Activated naive CD4-positive, alpha-beta T cell treated with anti-CD3 and anti-CD28 coated beads for 36 hours (primary cell): ENCODE measurements at regions of chr4 and their contacts with region 1.

Region 1: DNA sequence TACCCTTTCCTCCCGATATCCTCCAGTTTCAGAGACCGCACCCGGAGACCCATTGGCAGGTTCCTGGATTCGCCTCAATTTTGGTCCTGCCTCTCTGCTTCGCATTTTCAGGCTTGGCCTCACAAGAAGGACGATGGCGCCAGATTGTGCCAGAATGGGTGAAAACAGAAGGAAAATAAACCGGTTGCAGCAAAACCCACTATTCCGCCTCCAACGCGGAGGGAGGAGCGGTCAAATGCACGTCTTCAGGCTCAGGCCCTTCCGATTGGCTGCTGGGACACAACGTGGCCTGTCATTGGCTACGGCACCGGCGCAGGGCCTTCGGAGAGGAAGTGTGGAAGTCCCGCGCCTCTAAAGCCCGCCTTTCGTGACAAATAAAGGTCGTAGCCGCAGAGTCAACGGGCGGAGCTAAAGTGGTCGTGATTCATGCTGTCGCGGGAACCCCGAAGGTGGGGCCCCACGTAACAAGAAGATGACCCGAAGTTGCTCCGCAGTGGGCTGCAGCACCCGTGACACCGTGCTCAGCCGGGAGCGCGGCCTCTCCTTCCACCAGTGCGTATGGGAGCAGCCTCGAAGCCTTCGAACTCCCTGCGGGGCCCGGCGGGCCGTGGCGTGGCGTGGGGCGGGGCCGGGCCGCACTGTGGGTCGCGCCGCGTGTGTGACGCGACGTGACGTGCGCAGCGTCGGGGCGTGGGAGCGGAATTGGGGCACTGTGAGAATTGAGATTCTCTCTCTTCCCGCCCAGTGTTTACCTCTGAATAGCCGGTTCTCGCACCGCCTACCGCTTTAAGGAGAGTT is at the start of gene THAP9:
- DNase-seq: peak; percentile 99
- H3K4me3 Mint-ChIP-seq: no peak within 1 kb of the TSS
- H3K27ac Mint-ChIP-seq: no peak within 1 kb of the TSS
- H3K4me1 Mint-ChIP-seq: peaks cover 41% of the 10 kb centered on the region
- H3K27me3 Mint-ChIP-seq: no peaks in the 10 kb centered on the region
- total RNA-seq, gene THAP9: 2.7 to 3.3 TPM

Region 2: DNA sequence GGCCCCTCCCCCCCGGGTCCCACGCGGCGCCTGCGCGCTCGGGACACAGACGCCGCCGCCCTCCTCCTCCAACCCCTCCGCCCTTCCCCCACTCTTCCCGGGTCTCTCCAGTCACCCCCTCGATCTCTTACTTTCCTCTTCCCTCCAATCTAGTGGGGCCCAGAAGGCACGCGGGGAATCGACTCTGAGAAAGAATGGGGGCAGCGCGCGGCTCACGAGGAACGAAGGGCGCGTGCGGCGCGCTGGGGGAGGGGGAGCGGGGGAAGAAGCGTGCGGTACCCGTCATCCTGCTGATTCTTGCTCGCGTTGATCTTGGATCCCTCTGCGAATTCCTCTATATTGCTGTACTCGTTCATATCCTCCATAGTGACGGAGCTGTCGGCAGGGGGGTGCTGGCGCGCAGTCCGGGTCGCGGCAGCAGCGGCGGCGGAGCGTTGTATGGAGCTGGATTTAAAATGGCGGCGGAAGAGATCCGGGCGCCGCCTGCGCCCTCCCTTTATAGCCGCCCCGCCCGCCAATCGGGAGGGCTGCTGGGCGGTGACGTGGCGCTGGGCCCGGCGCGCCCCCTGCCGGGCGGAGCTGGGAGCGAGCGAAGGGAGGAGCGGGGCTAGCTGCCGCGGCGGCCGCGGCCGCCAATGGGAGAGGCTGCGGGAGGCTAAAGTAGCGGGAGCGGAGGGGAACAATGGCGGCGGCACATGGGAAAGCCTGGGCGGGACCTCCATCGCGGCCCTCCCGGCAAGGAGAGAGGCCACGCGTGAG is 471.4 kb before region 1 on chr4:
- CTCF ChIA-PET with region 1: no interaction called
- intact Hi-C with region 1: loop called (anchors 1 kb)
- DNase-seq: peak; percentile 92
- H3K4me3 Mint-ChIP-seq: peak overlapping the region; percentile 93
- H3K27ac Mint-ChIP-seq: peak overlapping the region; percentile 99
- H3K4me1 Mint-ChIP-seq: peaks cover 64% of the 10 kb centered on the region
- H3K27me3 Mint-ChIP-seq: no peaks in the 10 kb centered on the region

Region 3: DNA sequence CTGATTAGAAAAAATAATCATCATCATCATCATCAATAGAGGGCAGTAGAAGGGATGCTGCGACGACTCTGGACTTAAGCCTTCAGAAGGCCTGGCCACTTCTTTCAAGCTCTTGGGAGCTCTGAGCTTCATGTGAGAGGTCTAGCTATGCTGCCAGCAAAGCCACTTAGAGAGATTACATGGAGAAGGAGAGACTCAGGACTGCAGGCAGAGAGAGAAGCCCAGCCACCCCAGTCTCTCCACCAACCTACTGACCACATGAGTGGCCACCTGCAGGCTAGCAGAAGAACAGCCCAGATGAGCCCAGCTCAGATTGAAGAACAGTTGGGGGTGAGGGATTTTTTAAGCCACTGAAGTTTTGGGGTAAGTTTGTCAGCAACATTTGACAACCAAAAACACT is 321.6 kb before region 1 on chr4:
- CTCF ChIA-PET with region 1: no interaction called
- intact Hi-C with region 1: no loop called
- DNase-seq: no peak
- H3K4me3 Mint-ChIP-seq: no peak overlapping the region
- H3K27ac Mint-ChIP-seq: no peak overlapping the region
- H3K4me1 Mint-ChIP-seq: no peaks in the 10 kb centered on the region
- H3K27me3 Mint-ChIP-seq: no peaks in the 10 kb centered on the region

Region 4: DNA sequence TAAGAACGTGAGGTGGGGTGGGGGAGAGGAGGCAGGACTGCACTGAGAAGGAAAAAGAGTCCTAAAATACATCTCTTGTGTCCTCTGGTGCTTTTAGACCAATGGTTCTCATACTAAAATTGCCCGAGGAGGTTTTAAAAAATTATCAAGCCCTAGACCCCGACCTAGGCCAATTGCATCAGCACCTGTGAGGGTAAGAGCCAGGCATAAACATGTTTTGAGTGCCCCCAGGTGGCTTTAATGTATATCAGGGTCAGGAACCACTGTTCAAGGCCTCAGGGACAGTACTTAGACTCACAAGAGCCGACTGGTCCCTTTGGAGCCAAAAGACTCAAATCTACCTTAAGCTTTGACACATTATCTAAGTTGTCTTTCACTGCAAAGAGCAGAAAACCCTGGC is 301.2 kb before region 1 on chr4:
- CTCF ChIA-PET with region 1: no interaction called
- intact Hi-C with region 1: no loop called
- DNase-seq: no peak
- H3K4me3 Mint-ChIP-seq: no peak overlapping the region
- H3K27ac Mint-ChIP-seq: no peak overlapping the region
- H3K4me1 Mint-ChIP-seq: no peaks in the 10 kb centered on the region
- H3K27me3 Mint-ChIP-seq: peaks cover 5% of the 10 kb centered on the region

Region 5: GRCh38 chr4:83002329-83002728 is 101.8 kb after region 1 on chr4:
- CTCF ChIA-PET with region 1: no interaction called
- intact Hi-C with region 1: no loop called
- DNase-seq: no peak
- H3K4me3 Mint-ChIP-seq: no peak overlapping the region
- H3K27ac Mint-ChIP-seq: no peak overlapping the region
- H3K4me1 Mint-ChIP-seq: peaks cover 16% of the 10 kb centered on the region
- H3K27me3 Mint-ChIP-seq: no peaks in the 10 kb centered on the region

Region 6: GRCh38 chr4:83012687-83013419 is 112.3 kb after region 1 on chr4:
- CTCF ChIA-PET with region 1: interaction called, 8 read pairs
- intact Hi-C with region 1: loop called (anchors 1 kb)
- DNase-seq: peak; percentile 98
- H3K4me3 Mint-ChIP-seq: peak overlapping the region; percentile 95
- H3K27ac Mint-ChIP-seq: peak overlapping the region; percentile 87
- H3K4me1 Mint-ChIP-seq: peaks cover 29% of the 10 kb centered on the region
- H3K27me3 Mint-ChIP-seq: no peaks in the 10 kb centered on the region

Region 7: DNA sequence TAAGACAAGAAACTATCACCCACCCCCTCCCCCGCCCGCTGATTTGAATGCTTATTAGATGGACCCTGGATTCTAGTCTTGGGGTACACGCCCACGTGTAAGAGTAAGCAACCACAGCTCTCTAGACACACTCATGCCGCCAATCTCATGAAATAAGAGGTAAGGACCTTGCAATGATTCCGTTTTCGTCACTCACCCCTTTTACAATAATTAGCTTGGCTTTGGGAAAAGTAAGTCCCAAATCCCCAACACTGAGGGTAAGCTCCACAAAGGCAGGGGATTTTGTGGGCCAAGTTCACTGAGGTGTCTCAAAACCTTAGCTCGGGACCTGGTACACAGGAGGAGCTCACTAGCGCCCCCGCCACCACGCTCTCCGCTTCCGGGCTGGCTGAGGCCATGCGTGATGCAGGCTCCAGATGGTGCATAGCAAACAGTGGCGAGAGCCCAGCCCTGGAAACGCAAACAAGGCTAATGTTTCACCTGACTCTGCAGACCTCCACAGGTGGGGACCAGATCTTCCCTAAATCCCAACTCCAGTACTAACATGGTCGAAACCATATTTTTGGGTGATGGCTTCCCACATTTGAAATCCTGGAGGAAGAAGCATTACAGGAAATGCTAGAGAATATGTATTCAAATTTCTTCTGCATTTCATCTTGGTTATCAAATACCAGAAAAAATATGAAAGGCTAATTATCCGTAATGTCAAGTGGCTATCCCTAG is 209.9 kb after region 1 on chr4:
- CTCF ChIA-PET with region 1: interaction called, 3 read pairs
- intact Hi-C with region 1: loop called (anchors 2 kb)
- DNase-seq: peak; percentile 95
- H3K4me3 Mint-ChIP-seq: peak overlapping the region; percentile 88
- H3K27ac Mint-ChIP-seq: peak overlapping the region; percentile 98
- H3K4me1 Mint-ChIP-seq: peaks cover 41% of the 10 kb centered on the region
- H3K27me3 Mint-ChIP-seq: no peaks in the 10 kb centered on the region

Region 8: GRCh38 chr4:83348074-83348473 is 447.5 kb after region 1 on chr4:
- CTCF ChIA-PET with region 1: no interaction called
- intact Hi-C with region 1: loop called (anchors 1 kb)
- DNase-seq: no peak
- H3K4me3 Mint-ChIP-seq: no peak overlapping the region
- H3K27ac Mint-ChIP-seq: no peak overlapping the region
- H3K4me1 Mint-ChIP-seq: peaks cover 20% of the 10 kb centered on the region
- H3K27me3 Mint-ChIP-seq: no peaks in the 10 kb centered on the region

Region 9: GRCh38 chr4:83484500-83485461 is 584.3 kb after region 1 on chr4 and contains the start of gene ABRAXAS1:
- CTCF ChIA-PET with region 1: no interaction called
- intact Hi-C with region 1: loop called (anchors 2 kb)
- DNase-seq: peak; percentile 92
- H3K4me3 Mint-ChIP-seq: peak within 1 kb of the TSS; percentile 99
- H3K27ac Mint-ChIP-seq: peak within 1 kb of the TSS; percentile 91
- H3K4me1 Mint-ChIP-seq: peaks cover 19% of the 10 kb centered on the region
- H3K27me3 Mint-ChIP-seq: no peaks in the 10 kb centered on the region
- total RNA-seq, gene ABRAXAS1: 19.7 to 20.9 TPM